CD4-positive, alpha-beta memory T cell (primary cell): ENCODE measurements at regions of chr5 and their contacts with region 1.

Region 1: GRCh38 chr5:152560512-152561137 is 155.5 kb upstream of the NMUR2 start:
- DNase-seq: peak in 2 of 5 donors; percentile 1
- H3K4me3 ChIP-seq: no peak overlapping the region
- H3K4me3 Mint-ChIP-seq: no peak overlapping the region
- H3K27ac ChIP-seq: no peak overlapping the region
- H3K27ac Mint-ChIP-seq: no peak overlapping the region
- H3K4me1 ChIP-seq: no peaks in the 10 kb centered on the region
- H3K4me1 Mint-ChIP-seq: no peaks in the 10 kb centered on the region
- H3K27me3 ChIP-seq: no peaks in the 10 kb centered on the region
- H3K27me3 Mint-ChIP-seq: no peaks in the 10 kb centered on the region

Region 2: DNA sequence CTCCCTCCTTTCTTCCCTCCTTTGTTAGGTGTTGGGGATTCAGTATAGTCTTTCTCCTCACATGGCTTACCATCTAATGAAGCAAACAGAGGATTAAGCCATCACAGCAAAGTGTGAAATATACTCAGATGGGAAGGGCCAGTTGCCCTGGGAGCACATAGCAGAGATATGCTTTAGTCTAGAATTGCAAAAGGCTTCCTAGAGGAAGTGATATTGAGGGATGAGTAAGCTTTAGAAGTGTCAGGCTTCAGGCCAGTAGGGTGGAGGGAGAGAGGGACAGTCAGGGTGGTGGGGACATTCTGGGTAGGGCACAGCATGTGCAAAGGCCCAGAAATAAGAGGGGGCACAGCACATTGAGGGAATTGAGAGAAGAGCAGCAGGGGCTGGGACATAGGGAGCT is 589.7 kb before region 1 on chr5:
- CTCF ChIA-PET with region 1: no interaction called
- POLR2A ChIA-PET with region 1: no interaction called
- intact Hi-C with region 1: no loop called
- DNase-seq: no peak
- H3K4me3 ChIP-seq: no peak overlapping the region
- H3K4me3 Mint-ChIP-seq: no peak overlapping the region
- H3K27ac ChIP-seq: no peak overlapping the region
- H3K27ac Mint-ChIP-seq: no peak overlapping the region
- H3K4me1 ChIP-seq: no peaks in the 10 kb centered on the region
- H3K4me1 Mint-ChIP-seq: peaks cover 0 to 5% (median 0%) of the 10 kb centered on the region in 4 donors
- H3K27me3 ChIP-seq: no peaks in the 10 kb centered on the region
- H3K27me3 Mint-ChIP-seq: no peaks in the 10 kb centered on the region

Region 3: DNA sequence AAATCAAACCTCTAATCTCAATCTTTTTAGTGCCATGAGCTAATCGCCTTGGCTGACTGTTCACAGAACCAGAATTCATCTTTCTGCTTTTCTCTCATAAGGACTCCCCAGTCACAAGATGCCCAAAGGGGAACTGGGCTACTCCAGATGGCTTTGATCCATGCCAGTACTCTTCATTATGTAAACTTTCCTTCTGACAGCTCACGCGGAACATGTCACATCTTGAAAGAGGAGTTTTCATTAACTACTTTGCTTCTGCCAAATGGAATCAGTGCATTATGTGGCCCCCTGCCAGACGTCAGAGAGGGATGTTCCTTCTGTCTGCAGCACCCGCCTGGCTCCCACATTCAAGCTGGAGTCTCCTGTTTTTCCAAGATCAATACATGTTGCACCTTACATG is 13.4 kb before region 1 on chr5:
- CTCF ChIA-PET with region 1: no interaction called
- POLR2A ChIA-PET with region 1: no interaction called
- intact Hi-C with region 1: no loop called
- DNase-seq: no peak
- H3K4me3 ChIP-seq: no peak overlapping the region
- H3K4me3 Mint-ChIP-seq: no peak overlapping the region
- H3K27ac ChIP-seq: no peak overlapping the region
- H3K27ac Mint-ChIP-seq: no peak overlapping the region
- H3K4me1 ChIP-seq: no peaks in the 10 kb centered on the region
- H3K4me1 Mint-ChIP-seq: no peaks in the 10 kb centered on the region
- H3K27me3 ChIP-seq: no peaks in the 10 kb centered on the region
- H3K27me3 Mint-ChIP-seq: peaks cover 1 to 11% of the 10 kb centered on the region in 2 donors

Region 4: GRCh38 chr5:153964880-153965645 is 1404.4 kb after region 1 on chr5:
- CTCF ChIA-PET with region 1: interaction called, 10 read pairs
- POLR2A ChIA-PET with region 1: no interaction called
- intact Hi-C with region 1: no loop called
- DNase-seq: peak in 4 of 5 donors; percentile 7 to 30 (median 18)
- H3K4me3 ChIP-seq: no peak overlapping the region
- H3K4me3 Mint-ChIP-seq: no peak overlapping the region
- H3K27ac ChIP-seq: no peak overlapping the region
- H3K27ac Mint-ChIP-seq: peak overlapping the region in 1 of 7 donors; percentile 7
- H3K4me1 ChIP-seq: no peaks in the 10 kb centered on the region
- H3K4me1 Mint-ChIP-seq: peaks cover 6 to 12% (median 8%) of the 10 kb centered on the region in 4 donors
- H3K27me3 ChIP-seq: no peaks in the 10 kb centered on the region
- H3K27me3 Mint-ChIP-seq: peaks cover 3 to 6% of the 10 kb centered on the region in 2 donors